ENCODE measurements at regions of chr14 and their contacts with region 1.

Region 1: GRCh38 chr14:65356327-65356852 is 56.1 kb upstream of the FUT8 start:
- DNase-seq: peak; percentile 97 to 100
- H3K4me3 ChIP-seq: peak overlapping the region; percentile 54
- H3K27ac ChIP-seq: peak overlapping the region; percentile 95
- H3K4me1 ChIP-seq: peaks cover 82% of the 10 kb centered on the region
- H3K27me3 ChIP-seq: no peaks in the 10 kb centered on the region
- CTCF ChIP-seq: no peak; the same call in 1 of the 2 replicates

Region 2: GRCh38 chr14:65164068-65164824 is 192.1 kb before region 1 on chr14:
- CTCF ChIA-PET with region 1: interaction called, 3 read pairs
- POLR2A ChIA-PET with region 1: no interaction called
- intact Hi-C with region 1: loop called (anchors 1 kb)
- DNase-seq: peak; percentile 34 to 55
- H3K4me3 ChIP-seq: no peak overlapping the region
- H3K27ac ChIP-seq: no peak overlapping the region
- H3K4me1 ChIP-seq: peaks cover 17% of the 10 kb centered on the region
- H3K27me3 ChIP-seq: no peaks in the 10 kb centered on the region
- CTCF ChIP-seq: peak; percentile 97

Region 3: GRCh38 chr14:65239143-65239937 is 117.0 kb before region 1 on chr14:
- CTCF ChIA-PET with region 1: no interaction called
- POLR2A ChIA-PET with region 1: interaction called, 12 read pairs
- intact Hi-C with region 1: loop called (anchors 1 kb)
- DNase-seq: peak; percentile 68 to 91
- H3K4me3 ChIP-seq: peak overlapping the region; percentile 44; the same call in 1 of the 2 replicates
- H3K27ac ChIP-seq: peak overlapping the region; percentile 96
- H3K4me1 ChIP-seq: peaks cover 90% of the 10 kb centered on the region
- H3K27me3 ChIP-seq: no peaks in the 10 kb centered on the region
- CTCF ChIP-seq: no peak

Region 4: GRCh38 chr14:65281991-65282895 is 74.1 kb before region 1 on chr14:
- CTCF ChIA-PET with region 1: interaction called, 3 read pairs
- POLR2A ChIA-PET with region 1: no interaction called
- intact Hi-C with region 1: loop called (anchors 1 kb)
- DNase-seq: peak in 1 of 2 experiments; percentile 37
- H3K4me3 ChIP-seq: no peak overlapping the region
- H3K27ac ChIP-seq: no peak overlapping the region
- H3K4me1 ChIP-seq: peaks cover 20% of the 10 kb centered on the region
- H3K27me3 ChIP-seq: no peaks in the 10 kb centered on the region
- CTCF ChIP-seq: no peak

Region 5: DNA sequence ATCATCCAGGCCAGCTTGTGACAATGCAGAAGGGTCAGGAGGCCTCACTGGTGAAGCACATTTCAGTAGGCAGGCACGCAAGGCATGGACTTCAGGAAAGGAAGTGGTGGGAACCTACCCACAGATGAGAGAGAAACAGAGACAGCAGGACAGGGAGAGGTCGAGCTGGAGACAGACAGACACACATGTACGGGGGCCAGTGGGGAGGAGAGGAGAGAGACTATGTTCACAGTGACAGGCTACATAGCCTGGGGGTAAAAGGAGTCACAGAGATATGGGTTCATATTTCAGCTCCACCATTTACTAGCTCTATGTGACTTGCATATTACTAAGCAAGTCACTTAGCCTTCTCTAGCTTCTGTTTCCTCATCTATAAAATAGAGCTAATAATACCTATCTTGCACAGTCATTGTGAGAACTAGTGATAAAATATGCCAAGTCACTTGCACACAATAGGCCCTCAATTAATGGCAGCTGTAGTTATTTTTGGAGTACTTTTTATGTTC is 35.0 kb before region 1 on chr14:
- CTCF ChIA-PET with region 1: no interaction called
- POLR2A ChIA-PET with region 1: interaction called, 5 read pairs
- intact Hi-C with region 1: loop called (anchors 1 kb)
- DNase-seq: peak; percentile 62 to 98
- H3K4me3 ChIP-seq: no peak overlapping the region
- H3K27ac ChIP-seq: peak overlapping the region; percentile 99
- H3K4me1 ChIP-seq: peaks cover 66% of the 10 kb centered on the region
- H3K27me3 ChIP-seq: no peaks in the 10 kb centered on the region
- CTCF ChIP-seq: no peak